ENCODE measurements at regions of chr12 and their contacts with region 1.

Region 1: DNA sequence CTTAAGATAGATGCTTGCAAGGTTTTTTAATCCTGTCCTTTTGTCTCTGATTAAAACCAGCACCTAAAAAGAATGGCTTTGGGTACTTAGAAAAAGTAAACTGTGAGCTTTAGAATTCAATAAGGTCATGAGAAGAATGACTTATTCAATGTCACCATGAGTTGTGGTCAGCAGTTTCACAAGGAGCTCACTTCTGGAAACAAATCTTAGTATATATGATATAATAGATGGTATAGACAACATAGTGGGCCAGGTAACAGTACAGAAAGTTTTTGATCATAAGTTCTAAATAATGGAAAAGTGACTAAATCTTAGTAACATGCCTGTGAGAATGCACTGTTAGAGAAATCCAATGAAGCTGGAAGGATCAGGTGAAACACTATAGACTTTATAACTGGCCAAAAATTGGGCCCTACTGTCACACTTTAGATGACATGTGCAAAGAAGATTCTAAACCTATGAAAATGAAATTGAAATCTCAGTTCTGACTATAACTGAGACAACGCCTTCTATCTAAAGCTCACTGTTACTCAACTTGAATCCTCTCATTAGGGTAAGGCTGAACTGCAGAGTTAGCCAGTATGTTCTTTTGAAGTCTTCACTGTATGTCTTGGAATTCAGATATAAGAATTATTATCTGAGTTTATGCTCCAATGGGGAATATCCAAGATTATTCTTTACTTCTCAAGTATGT is 42.4 kb upstream of the RAD51AP1 start:
- DNase-seq: no peak
- H3K4me3 Mint-ChIP-seq: no peak overlapping the region
- H3K27ac Mint-ChIP-seq: no peak overlapping the region
- H3K4me1 Mint-ChIP-seq: peaks cover 14% of the 10 kb centered on the region
- H3K27me3 Mint-ChIP-seq: no peaks in the 10 kb centered on the region

Region 2: GRCh38 chr12:4506870-4507269 is 10.6 kb after region 1 on chr12:
- intact Hi-C with region 1: loop called (anchors 1 kb)
- DNase-seq: peak; percentile 26
- H3K4me3 Mint-ChIP-seq: peak overlapping the region; percentile 31
- H3K27ac Mint-ChIP-seq: peak overlapping the region; percentile 35
- H3K4me1 Mint-ChIP-seq: peaks cover 26% of the 10 kb centered on the region
- H3K27me3 Mint-ChIP-seq: no peaks in the 10 kb centered on the region